WTC11 (cell line): ENCODE measurements at regions of chr11 and their contacts with region 1.

Region 1: DNA sequence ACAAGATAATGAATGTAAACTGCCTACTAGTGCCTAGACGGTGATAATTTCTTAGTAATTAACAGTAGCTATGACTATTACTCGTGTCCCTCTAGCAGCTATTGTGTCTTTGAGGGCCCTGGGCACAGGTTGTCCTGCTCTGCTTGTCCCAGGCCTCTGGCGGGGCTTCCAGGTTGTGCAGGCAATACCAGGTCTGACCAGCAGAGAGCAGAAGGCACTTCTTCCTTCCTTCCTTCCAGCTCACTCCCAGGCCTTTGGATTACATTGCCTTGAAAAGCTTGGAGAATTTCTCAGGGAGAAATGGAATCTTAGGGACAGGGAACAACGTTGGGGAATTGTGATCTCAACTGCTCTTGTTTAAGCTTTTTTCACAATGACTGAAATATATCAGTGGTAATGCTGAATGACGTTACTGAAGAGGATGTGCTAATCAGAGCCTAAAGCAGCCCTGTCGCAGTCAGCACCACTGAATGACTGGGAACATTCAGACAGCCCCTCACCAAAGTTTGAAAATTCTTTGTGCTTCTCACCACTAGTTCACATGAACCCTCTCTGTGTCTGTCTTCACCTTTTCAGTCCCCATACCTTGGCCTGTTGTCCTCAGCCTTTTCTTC is 8.4 kb upstream of the CCKBR start:
- DNase-seq: peak; percentile 89
- ATAC-seq: peak; percentile 99
- H3K4me3 Mint-ChIP-seq: no peak overlapping the region
- H3K27ac Mint-ChIP-seq: no peak overlapping the region
- H3K4me1 Mint-ChIP-seq: peaks cover 8% of the 10 kb centered on the region
- H3K27me3 Mint-ChIP-seq: peaks cover 4% of the 10 kb centered on the region
- CTCF ChIP-seq: peak; percentile 80

Region 2: GRCh38 chr11:6022956-6023355 is 228.3 kb before region 1 on chr11:
- CTCF ChIA-PET with region 1: interaction called, 23 read pairs
- POLR2A ChIA-PET with region 1: no interaction called
- DNase-seq: no peak
- ATAC-seq: peak; percentile 93
- H3K4me3 Mint-ChIP-seq: no peak overlapping the region
- H3K27ac Mint-ChIP-seq: no peak overlapping the region
- H3K4me1 Mint-ChIP-seq: 0 out of 2 replicates have a peak, but pooled peaks cover 4% of the 10 kb centered on the region
- H3K27me3 Mint-ChIP-seq: peaks cover 26% of the 10 kb centered on the region
- CTCF ChIP-seq: no peak

Region 3: DNA sequence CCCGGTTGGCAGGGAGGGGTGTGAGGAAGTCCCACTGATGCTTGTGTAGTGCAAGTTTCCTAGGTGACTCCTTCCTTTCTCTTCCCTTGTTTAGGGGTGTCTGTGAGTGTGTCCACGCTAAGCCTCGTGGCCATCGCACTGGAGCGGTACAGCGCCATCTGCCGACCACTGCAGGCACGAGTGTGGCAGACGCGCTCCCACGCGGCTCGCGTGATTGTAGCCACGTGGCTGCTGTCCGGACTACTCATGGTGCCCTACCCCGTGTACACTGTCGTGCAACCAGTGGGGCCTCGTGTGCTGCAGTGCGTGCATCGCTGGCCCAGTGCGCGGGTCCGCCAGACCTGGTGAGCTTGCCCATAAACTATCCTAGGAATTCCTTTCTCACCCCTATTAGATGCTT is 18.8 kb after region 1 on chr11:
- CTCF ChIA-PET with region 1: interaction called, 82 read pairs
- POLR2A ChIA-PET with region 1: interaction called, 4 read pairs
- DNase-seq: peak; percentile 59
- ATAC-seq: peak; percentile 38
- H3K4me3 Mint-ChIP-seq: no peak overlapping the region
- H3K27ac Mint-ChIP-seq: no peak overlapping the region
- H3K4me1 Mint-ChIP-seq: peaks cover 7% of the 10 kb centered on the region; the same call in 1 of the 2 replicates
- H3K27me3 Mint-ChIP-seq: peaks cover 30% of the 10 kb centered on the region
- CTCF ChIP-seq: peak; percentile 60; the same call in 1 of the 2 replicates

Region 4: GRCh38 chr11:6298605-6299004 is 47.4 kb after region 1 on chr11:
- CTCF ChIA-PET with region 1: interaction called, 77 read pairs
- POLR2A ChIA-PET with region 1: no interaction called
- DNase-seq: peak; percentile 86
- ATAC-seq: peak; percentile 96
- H3K4me3 Mint-ChIP-seq: no peak overlapping the region
- H3K27ac Mint-ChIP-seq: peak overlapping the region; percentile 40; the same call in 1 of the 2 replicates
- H3K4me1 Mint-ChIP-seq: peaks cover 57% of the 10 kb centered on the region
- H3K27me3 Mint-ChIP-seq: no peaks in the 10 kb centered on the region
- CTCF ChIP-seq: peak; percentile 52; the same call in 1 of the 2 replicates

Region 5: DNA sequence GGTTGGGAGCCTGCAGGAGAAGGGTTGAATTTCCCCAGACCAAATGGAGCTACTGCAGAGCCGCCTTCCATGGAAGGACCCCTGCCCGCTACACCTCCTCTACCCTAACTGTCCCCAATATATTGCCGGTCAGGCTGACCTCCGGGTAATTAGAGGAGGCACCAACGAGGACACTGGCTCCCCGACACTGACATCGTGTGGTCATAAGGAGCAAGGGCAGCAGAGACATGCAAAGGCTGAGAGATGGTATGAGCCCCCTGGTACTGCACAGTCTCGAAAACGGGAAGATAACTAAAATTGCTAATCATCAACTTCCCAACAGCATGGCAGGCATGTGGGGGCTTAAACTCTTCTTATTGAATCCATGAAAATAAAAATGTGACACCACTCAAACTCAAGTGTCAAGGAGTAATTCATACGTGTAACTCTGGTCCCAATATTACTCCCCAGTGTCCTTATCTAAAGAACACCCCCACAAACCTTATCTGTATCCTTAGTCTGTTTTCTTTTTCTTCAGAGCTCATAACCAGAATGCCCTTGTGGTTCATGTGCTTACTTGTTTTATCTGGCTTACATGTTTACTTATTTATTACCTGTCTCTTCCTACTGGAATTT is 64.7 kb after region 1 on chr11:
- CTCF ChIA-PET with region 1: interaction called, 102 read pairs
- POLR2A ChIA-PET with region 1: no interaction called
- DNase-seq: peak; percentile 68
- ATAC-seq: peak; percentile 65
- H3K4me3 Mint-ChIP-seq: no peak overlapping the region
- H3K27ac Mint-ChIP-seq: no peak overlapping the region
- H3K4me1 Mint-ChIP-seq: peaks cover 22% of the 10 kb centered on the region
- H3K27me3 Mint-ChIP-seq: peaks cover 9% of the 10 kb centered on the region
- CTCF ChIP-seq: peak; percentile 69